ENCODE measurements at regions of chr11 and their contacts with region 1.

Region 1: DNA sequence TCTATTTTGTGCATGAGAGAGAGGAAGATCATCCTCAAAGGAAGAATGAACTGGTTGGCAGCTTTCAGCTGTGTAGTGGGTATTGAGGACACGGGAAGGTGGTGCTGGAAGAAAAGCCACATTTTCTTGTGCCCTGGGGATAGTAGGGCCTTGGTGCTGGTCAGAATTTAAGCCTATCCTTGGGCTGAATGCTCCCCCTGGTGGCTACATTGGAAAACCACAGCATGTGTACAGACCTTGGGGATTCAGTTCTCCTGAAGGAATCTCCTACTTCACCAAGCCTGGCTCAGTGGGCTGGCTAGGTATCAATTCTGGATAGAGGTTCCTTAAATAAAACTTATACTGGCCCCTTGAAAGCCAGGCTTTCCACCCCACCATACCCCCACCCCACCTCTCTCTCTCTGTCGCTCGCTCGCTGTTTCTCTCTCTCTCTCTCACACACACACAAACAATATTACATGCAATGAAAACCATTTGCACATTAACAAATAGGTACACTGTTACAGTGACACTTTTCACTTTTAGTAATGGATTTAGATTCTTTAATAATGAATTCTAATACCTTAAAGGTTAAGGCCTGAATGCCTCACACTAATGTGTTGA is 2.8 kb upstream of the OR51M1 start:
- DNase-seq: peak; percentile 61
- H3K4me3 ChIP-seq: no peak overlapping the region
- H3K27ac ChIP-seq: no peak overlapping the region
- H3K4me1 ChIP-seq: no peaks in the 10 kb centered on the region
- CTCF ChIP-seq: peak; percentile 87

Region 2: DNA sequence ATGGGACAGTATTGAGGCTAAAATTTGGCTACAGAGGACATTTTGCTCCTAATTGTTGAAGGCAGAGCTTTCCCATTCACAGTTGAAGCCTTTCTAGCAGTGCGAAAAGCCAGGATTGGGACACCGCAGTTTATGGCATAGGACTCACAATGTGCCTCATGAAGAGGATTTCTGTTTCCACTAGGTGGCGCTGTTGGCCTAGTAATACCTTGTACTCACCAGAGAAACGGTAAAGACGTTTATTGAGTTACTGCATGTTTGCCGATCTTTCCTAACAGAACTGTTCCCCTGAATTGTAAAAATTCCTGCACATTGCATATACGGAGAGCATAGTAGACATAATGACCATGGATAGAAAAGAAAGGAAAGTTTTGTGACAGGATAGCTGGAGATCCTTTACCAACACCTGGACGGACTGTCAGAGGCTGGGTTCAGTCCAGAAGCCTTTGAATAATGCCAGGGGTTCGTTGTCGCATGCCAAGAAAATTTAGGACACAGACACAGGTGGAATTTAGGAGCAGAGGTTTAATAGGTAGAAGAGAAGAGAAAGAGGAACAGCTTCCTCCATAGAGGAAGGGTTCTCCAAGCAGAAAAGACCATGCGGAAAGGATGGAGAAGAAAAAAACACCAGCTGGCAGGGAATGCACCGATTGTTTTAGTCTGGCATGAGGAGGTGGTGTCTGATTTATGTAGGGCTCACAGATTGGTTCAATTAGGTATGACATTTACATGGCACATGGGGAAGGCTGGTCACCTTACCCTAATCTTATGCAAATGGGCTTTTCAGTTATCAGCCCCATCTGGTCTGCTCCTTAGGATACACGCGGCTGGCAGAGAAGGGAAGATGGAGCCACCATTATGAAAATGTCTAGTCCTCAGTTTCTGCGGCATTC is 754.4 kb before region 1 on chr11:
- CTCF ChIA-PET with region 1: no interaction called
- POLR2A ChIA-PET with region 1: no interaction called
- intact Hi-C with region 1: loop called (anchors 5 kb)
- DNase-seq: peak; percentile 82
- H3K4me3 ChIP-seq: no peak overlapping the region
- H3K27ac ChIP-seq: no peak overlapping the region
- H3K4me1 ChIP-seq: no peaks in the 10 kb centered on the region
- CTCF ChIP-seq: peak; percentile 87

Region 3: DNA sequence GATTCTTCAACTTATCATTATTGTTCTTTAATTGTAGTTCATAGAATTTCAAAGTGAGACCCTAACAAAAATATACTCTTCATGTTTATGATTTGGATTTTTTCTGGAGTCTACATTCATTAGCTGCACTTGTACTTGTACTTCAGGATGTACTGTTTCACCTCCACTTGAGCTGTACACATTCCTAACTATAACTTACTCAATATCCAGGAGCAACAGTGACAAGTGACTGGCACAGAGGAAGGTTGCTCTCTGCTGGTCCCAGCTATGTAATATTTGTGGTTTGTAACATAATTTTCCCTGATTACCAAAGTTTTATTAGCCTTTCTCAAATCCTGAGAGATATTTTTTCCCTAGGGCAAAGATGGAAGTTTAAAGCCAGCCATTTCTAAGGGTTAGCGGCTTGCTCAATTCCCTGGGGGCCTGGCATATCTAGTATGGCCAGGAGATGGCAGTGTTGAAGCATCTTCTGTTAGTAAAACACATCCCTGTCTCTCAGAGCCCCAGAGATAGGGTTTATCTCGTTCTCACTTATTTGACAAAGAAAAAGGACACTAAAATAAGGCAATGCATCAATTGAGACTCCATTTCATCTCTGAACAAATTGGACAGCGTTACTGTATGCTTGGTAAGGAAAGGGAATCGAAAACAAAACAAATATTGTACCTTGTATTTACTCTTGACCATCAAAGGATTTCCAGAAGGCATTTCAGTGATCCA is 256.9 kb before region 1 on chr11:
- CTCF ChIA-PET with region 1: no interaction called
- POLR2A ChIA-PET with region 1: no interaction called
- intact Hi-C with region 1: loop called (anchors 2 kb)
- DNase-seq: peak; percentile 72
- H3K4me3 ChIP-seq: no peak overlapping the region
- H3K27ac ChIP-seq: no peak overlapping the region
- H3K4me1 ChIP-seq: no peaks in the 10 kb centered on the region
- CTCF ChIP-seq: peak; percentile 91

Region 4: DNA sequence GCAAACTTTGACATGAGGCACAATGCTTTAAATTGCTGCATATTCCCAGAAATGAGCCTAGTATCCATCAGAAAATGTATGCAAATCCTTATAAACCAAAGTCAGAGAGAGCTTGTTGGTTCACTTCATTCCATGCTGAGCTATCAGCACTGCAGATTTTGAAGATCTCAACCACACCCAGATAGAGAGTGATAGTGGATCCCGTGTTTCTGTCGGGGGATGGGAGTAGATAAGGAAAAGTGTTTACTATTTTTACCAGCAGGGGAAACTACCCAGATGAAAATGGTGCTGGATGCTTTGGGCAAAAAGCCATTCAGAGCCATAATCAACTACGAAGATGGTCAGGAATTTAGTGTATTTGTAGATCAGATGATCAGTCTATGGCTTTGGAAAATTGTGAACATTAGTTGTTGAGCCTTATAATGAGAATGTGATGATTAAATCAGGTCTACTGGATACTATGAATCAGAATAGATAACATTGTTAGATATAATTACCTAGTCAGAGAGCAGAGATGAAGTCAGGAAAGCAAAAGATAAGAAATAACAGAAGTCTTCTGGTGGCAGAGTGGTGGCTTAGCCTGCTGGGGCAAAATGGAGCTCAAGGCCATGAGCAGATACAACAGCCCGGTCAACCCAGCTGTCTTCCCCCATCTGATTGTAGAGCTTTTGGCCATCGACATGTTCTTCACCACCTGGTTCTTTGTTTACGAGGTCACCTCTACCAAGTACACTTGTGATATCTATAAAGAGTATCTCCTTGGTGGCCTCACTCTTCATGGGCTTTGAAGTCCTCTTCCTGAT is 18.6 kb before region 1 on chr11:
- CTCF ChIA-PET with region 1: no interaction called
- POLR2A ChIA-PET with region 1: no interaction called
- intact Hi-C with region 1: no loop called
- DNase-seq: no peak
- H3K4me3 ChIP-seq: no peak overlapping the region
- H3K27ac ChIP-seq: no peak overlapping the region
- H3K4me1 ChIP-seq: no peaks in the 10 kb centered on the region
- CTCF ChIP-seq: no peak